Activated CD4-positive, alpha-beta memory T cell treated with anti-CD3 and anti-CD28 coated beads for 36 hours (primary cell): ENCODE measurements at regions of chr1 and their contacts with region 1.

Region 1: GRCh38 chr1:198734323-198735008 is 95.6 kb downstream of the PTPRC start:
- DNase-seq: no peak
- H3K4me3 Mint-ChIP-seq: no peak overlapping the region
- H3K27ac Mint-ChIP-seq: peak overlapping the region; percentile 68
- H3K4me1 Mint-ChIP-seq: peaks cover 70% of the 10 kb centered on the region
- H3K27me3 Mint-ChIP-seq: no peaks in the 10 kb centered on the region

Region 2: GRCh38 chr1:198497346-198498102 is 236.9 kb before region 1 on chr1:
- CTCF ChIA-PET with region 1: no interaction called
- POLR2A ChIA-PET with region 1: no interaction called
- intact Hi-C with region 1: no loop called
- DNase-seq: no peak
- H3K4me3 Mint-ChIP-seq: no peak overlapping the region
- H3K27ac Mint-ChIP-seq: no peak overlapping the region
- H3K4me1 Mint-ChIP-seq: peaks cover 13% of the 10 kb centered on the region
- H3K27me3 Mint-ChIP-seq: no peaks in the 10 kb centered on the region

Region 3: GRCh38 chr1:198749279-198749678 is 14.8 kb after region 1 on chr1:
- CTCF ChIA-PET with region 1: no interaction called
- POLR2A ChIA-PET with region 1: interaction called, 4 read pairs
- intact Hi-C with region 1: loop called (anchors 2 kb)
- DNase-seq: no peak
- H3K4me3 Mint-ChIP-seq: no peak overlapping the region
- H3K27ac Mint-ChIP-seq: peak overlapping the region; percentile 52
- H3K4me1 Mint-ChIP-seq: peaks cover 12% of the 10 kb centered on the region
- H3K27me3 Mint-ChIP-seq: no peaks in the 10 kb centered on the region

Region 4: GRCh38 chr1:198809247-198809646 is 74.8 kb after region 1 on chr1:
- CTCF ChIA-PET with region 1: no interaction called
- POLR2A ChIA-PET with region 1: no interaction called
- intact Hi-C with region 1: no loop called
- DNase-seq: no peak
- H3K4me3 Mint-ChIP-seq: no peak overlapping the region
- H3K27ac Mint-ChIP-seq: no peak overlapping the region
- H3K4me1 Mint-ChIP-seq: no peaks in the 10 kb centered on the region
- H3K27me3 Mint-ChIP-seq: no peaks in the 10 kb centered on the region